ENCODE measurements at regions of chr13 and their contacts with region 1.

Region 1: DNA sequence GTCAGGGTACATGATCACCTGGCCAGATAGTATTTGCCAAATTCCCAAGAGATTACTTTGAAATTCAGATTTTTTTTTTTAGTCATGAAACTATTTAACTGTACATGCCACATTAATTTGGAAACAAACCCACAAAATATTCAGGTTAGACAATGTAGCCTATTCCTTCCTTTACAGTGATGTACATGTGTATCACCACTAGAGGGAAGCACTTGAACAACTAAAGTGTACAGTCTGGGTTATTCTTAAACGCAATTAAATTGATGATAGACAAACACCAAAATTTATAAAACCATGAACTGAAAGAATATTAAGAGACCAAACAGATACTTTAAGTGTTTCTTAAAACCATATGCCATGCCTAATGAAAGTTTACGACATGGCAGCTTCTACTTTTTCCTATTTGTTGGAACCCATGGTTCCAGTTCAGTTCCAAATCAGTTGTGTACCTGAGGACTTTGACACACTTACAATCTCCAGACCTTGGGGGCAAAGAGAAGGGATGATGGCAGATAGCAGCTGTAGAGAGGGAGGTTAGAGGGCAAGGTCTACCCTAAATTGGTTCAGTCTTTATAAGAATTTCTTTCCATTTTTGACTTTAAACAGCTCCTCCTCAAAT is 52.8 kb downstream of the TNFSF13B start:
- DNase-seq: peak; percentile 42
- H3K4me3 ChIP-seq: no peak overlapping the region
- H3K27ac ChIP-seq: no peak overlapping the region
- H3K4me1 ChIP-seq: no peaks in the 10 kb centered on the region
- H3K27me3 ChIP-seq: peaks cover 0 to 3% of the 10 kb centered on the region in 2 experiments
- CTCF ChIP-seq: peak; percentile 50 to 53
- POLR2A ChIP-seq: no peak

Region 2: GRCh38 chr13:107977071-107977574 is 345.2 kb before region 1 on chr13:
- CTCF ChIA-PET with region 1: no interaction called
- POLR2A ChIA-PET with region 1: no interaction called
- dilution Hi-C with region 1: no loop called
- intact Hi-C with region 1: no loop called
- DNase-seq: no peak
- H3K4me3 ChIP-seq: no peak overlapping the region
- H3K27ac ChIP-seq: no peak overlapping the region
- H3K4me1 ChIP-seq: no peaks in the 10 kb centered on the region
- H3K27me3 ChIP-seq: no peaks in the 10 kb centered on the region
- CTCF ChIP-seq: no peak
- POLR2A ChIP-seq: no peak

Region 3: DNA sequence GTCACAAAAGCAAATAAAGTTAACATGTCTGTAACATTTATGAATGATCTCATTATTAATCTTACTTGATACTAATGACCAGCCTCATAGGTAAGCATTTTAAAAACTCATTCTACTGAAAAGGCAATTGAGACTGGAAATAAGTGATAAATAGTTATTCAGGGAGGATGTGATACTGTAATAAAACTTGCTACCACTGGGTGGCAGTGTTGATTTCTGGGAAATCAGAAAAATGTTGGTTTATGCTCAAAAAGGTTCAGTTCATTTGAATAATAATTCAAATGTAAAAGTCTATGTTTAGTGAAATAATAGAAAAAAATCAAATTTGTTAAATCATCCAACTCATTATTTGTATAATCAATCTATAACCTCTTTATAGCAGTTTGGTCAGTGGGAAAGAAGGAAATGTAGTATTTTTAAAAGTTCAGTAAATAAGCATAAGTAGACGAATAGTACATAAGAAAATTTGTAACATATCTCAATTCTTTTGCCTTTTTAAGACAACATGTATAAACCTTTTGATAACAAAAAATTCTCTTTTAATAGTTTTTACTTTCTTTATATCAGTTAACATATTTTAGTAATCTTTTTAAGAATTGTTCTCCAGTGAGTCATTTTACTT is 94.6 kb before region 1 on chr13:
- CTCF ChIA-PET with region 1: no interaction called
- POLR2A ChIA-PET with region 1: no interaction called
- dilution Hi-C with region 1: no loop called
- intact Hi-C with region 1: loop called (anchors 2 kb)
- DNase-seq: peak; percentile 55
- H3K4me3 ChIP-seq: no peak overlapping the region
- H3K27ac ChIP-seq: no peak overlapping the region
- H3K4me1 ChIP-seq: no peaks in the 10 kb centered on the region
- H3K27me3 ChIP-seq: no peaks in the 10 kb centered on the region
- CTCF ChIP-seq: peak; percentile 49 to 50
- POLR2A ChIP-seq: no peak

Region 4: DNA sequence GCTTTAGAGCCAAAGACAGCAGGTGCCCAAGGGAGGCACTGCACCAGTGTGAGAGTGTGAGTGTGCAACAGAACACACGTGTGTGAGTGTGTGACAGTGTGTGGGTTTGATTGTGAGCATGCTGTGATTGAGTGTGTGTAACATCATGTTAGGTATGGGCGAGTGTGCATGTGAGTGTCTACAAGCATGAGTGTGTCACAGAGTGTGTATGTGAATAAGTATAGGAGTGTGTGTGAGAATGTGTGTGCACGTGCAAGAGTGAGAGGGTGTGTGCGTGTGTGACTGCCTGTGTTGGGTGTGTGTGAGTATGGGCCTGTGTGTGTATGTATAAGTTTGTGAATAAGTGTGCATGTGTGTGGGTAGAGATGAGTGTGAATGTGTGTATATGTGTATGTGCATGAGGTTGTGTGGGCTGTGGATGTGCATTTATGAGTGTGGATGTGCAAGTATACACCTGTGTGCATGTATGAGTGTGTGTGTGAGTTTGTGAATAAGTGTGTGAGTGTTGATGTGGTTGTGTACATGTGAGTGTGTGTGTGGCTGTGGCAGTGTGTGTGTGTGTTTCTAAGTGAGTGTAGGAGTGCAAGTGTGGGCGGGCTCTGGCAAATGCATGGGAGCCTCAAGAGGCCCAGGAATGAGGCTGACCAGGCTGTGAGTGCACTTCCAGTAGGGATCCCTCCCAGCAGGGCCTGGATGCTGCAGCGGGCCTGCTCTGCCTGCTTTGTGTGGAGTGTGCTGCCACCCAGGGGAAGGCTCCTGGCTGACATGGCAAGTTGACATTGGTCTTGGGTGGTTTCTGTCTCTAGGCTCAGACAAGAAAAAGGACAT is 1786.2 kb after region 1 on chr13:
- CTCF ChIA-PET with region 1: no interaction called
- POLR2A ChIA-PET with region 1: no interaction called
- dilution Hi-C with region 1: no loop called
- intact Hi-C with region 1: loop called (anchors 2 kb)
- DNase-seq: peak; percentile 46
- H3K4me3 ChIP-seq: no peak overlapping the region
- H3K27ac ChIP-seq: no peak overlapping the region
- H3K4me1 ChIP-seq: no peaks in the 10 kb centered on the region
- H3K27me3 ChIP-seq: peaks cover 0 to 3% of the 10 kb centered on the region in 2 experiments
- CTCF ChIP-seq: peak; percentile 25 to 68
- POLR2A ChIP-seq: no peak

Region 5: DNA sequence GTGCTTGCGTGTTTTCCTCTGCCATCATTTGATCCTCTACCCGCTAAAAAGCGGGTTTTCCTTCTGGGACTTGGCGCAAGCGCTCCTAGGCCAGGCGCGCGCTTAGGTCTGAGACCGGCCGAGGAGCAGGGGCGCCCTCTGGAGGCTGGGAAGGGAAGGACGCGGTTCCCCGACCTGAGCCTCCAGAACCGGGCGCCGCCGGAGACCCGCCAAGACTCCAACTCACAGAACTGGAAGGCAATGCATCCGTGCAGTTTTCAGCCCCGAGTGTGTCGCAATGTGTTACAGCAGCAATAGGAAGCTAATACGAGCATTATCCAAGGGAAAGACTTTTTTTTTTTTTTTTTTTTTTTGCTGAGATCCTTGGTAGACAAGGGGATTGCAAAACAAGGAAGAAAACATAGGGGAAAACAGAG is 1793.8 kb after region 1 on chr13:
- CTCF ChIA-PET with region 1: no interaction called
- POLR2A ChIA-PET with region 1: no interaction called
- dilution Hi-C with region 1: no loop called
- intact Hi-C with region 1: loop called (anchors 1 kb)
- DNase-seq: peak; percentile 59
- H3K4me3 ChIP-seq: no peak overlapping the region
- H3K27ac ChIP-seq: no peak overlapping the region
- H3K4me1 ChIP-seq: no peaks in the 10 kb centered on the region
- H3K27me3 ChIP-seq: peaks cover 17 to 22% of the 10 kb centered on the region in 2 experiments
- CTCF ChIP-seq: peak; percentile 92 to 97
- POLR2A ChIP-seq: no peak